ENCODE measurements at regions of chr11 and their contacts with region 1.

Region 1: GRCh38 chr11:1574238-1574932 is 2.3 kb upstream of the DUSP8 start:
- DNase-seq: no peak
- ATAC-seq: peak; percentile 60
- H3K4me3 ChIP-seq: peak overlapping the region; percentile 65 to 76 (median 72)
- H3K27ac ChIP-seq: no peak overlapping the region
- H3K4me1 ChIP-seq: peaks cover 35% of the 10 kb centered on the region
- H3K27me3 ChIP-seq: peaks cover 1 to 17% of the 10 kb centered on the region in 2 experiments; a peak in 3 of 5 replicates
- CTCF ChIP-seq: peak; percentile 71
- EP300 ChIP-seq: no peak
- POLR2A ChIP-seq: no peak
- RAD21 ChIP-seq: peak; percentile 94

Region 2: GRCh38 chr11:1541474-1542204 is 32.7 kb before region 1 on chr11:
- CTCF ChIA-PET with region 1: interaction called, 17 read pairs
- POLR2A ChIA-PET with region 1: interaction called, 4 read pairs
- in situ Hi-C with region 1: no loop called
- intact Hi-C with region 1: loop called (anchors 2 kb)
- DNase-seq: peak; percentile 45
- ATAC-seq: peak; percentile 86
- H3K4me3 ChIP-seq: peak overlapping the region in 1 of 3 experiments; percentile 0; a peak in 1 of 6 replicates
- H3K27ac ChIP-seq: no peak overlapping the region
- H3K4me1 ChIP-seq: peaks cover 5% of the 10 kb centered on the region; the same call in 1 of the 2 replicates
- H3K27me3 ChIP-seq: peaks cover 33 to 69% of the 10 kb centered on the region in 2 experiments; a peak in 4 of 5 replicates
- CTCF ChIP-seq: 0 out of 2 replicates have a peak, but pooled peaks have one; percentile 18
- EP300 ChIP-seq: no peak
- POLR2A ChIP-seq: no peak
- RAD21 ChIP-seq: no peak

Region 3: GRCh38 chr11:1546536-1547400 is 27.6 kb before region 1 on chr11:
- CTCF ChIA-PET with region 1: interaction called, 17 read pairs
- POLR2A ChIA-PET with region 1: interaction called, 4 read pairs
- in situ Hi-C with region 1: no loop called
- intact Hi-C with region 1: loop called (anchors 2 kb)
- DNase-seq: no peak
- ATAC-seq: peak; percentile 59
- H3K4me3 ChIP-seq: peak overlapping the region; percentile 3 to 63 (median 40); a peak in 4 of 6 replicates
- H3K27ac ChIP-seq: no peak overlapping the region
- H3K4me1 ChIP-seq: peaks cover 9% of the 10 kb centered on the region
- H3K27me3 ChIP-seq: peaks cover 34 to 67% of the 10 kb centered on the region in 2 experiments; a peak in 4 of 5 replicates
- CTCF ChIP-seq: peak; percentile 71
- EP300 ChIP-seq: no peak
- POLR2A ChIP-seq: no peak
- RAD21 ChIP-seq: peak; percentile 88

Region 4: DNA sequence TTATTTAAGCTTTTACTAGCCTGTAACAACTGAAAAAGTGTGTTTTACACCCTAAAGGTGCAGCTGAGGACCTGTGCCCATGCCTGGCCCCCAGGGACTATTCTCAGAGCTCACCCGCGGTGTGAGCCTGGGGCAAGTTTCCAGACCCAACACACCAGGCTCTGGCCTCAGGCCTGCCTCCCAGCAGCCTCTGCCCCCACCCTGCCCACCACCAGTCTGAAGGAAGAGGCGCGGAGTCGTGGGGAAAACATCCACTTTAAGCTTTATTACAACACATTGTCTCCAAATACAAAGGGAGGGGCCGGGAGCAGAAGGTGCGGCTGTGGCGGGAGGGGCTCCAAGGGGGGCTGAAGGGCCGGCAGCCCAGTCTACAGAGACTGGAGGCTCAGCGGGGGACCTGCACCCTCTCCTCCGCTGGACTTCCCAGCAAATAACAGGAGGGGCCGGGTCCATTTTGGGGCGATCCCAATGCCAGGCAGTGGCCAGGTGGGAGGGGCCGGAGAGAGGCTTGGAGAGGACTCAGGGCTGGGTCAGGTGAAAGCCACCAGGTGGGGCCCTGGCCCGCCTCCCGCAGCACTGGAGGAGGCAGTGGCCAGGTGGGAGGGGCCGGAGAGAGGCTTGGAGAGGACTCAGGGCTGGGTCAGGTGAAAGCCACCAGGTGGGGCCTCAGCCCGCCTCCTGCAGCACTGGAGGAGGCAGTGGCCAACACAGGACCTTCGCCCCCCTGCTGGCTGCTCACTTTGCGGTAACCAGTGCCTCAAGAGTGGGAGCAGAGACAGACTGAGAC is 20.4 kb before region 1 on chr11:
- CTCF ChIA-PET with region 1: no interaction called
- POLR2A ChIA-PET with region 1: no interaction called
- in situ Hi-C with region 1: no loop called
- intact Hi-C with region 1: loop called (anchors 2 kb)
- DNase-seq: no peak
- ATAC-seq: peak; percentile 70
- H3K4me3 ChIP-seq: no peak overlapping the region
- H3K27ac ChIP-seq: no peak overlapping the region
- H3K4me1 ChIP-seq: peaks cover 6% of the 10 kb centered on the region; the same call in 1 of the 2 replicates
- H3K27me3 ChIP-seq: peaks cover 2 to 4% of the 10 kb centered on the region in 2 experiments; a peak in 4 of 5 replicates
- CTCF ChIP-seq: peak; percentile 70
- EP300 ChIP-seq: no peak
- POLR2A ChIP-seq: no peak
- RAD21 ChIP-seq: no peak; the same call in 1 of the 2 replicates

Region 5: DNA sequence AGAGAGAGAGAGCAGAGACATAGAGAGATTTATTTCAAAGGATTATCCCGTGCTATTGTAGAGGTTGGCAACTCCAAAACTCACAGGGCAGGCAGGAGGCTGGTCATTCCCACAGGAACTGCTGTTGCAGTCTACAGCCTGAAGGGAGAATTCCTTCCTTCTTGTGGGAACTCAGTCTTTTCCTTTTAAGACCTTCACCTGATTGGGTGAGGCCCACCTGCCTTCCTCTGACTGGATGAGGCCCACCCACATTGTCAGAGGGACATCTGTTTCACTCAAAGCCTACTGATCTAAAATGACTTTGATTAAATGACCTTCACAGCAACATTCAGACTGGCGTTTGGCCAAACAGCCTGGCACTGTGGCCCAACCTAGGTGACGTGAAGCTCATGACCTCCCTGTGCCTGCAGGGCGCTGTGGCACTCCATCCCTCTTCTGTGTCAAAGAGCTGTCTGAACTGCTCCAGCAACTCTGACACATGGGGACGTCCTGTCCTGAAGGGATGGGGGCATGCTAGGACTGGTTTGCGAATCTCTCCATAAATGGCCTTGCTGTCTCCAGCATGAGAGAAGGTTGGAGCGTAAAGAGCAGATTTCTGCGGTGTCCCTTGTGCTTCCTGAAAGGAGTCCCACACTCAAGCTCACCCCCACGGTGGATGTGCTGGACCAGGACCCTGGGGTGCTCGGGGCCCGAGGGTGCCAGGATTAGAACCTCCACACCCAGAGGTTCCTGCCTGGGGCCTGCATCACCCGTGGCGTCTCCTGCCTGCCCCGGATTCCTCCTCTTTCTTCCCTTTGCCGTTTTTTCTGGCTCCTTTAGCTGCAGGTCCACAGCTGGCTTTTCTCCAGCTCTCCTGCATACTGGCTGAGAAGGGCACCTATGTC is 75.9 kb after region 1 on chr11:
- CTCF ChIA-PET with region 1: no interaction called
- POLR2A ChIA-PET with region 1: no interaction called
- in situ Hi-C with region 1: no loop called
- intact Hi-C with region 1: no loop called
- DNase-seq: no peak
- ATAC-seq: no peak
- H3K4me3 ChIP-seq: no peak overlapping the region
- H3K27ac ChIP-seq: no peak overlapping the region
- H3K4me1 ChIP-seq: peaks cover 61% of the 10 kb centered on the region
- H3K27me3 ChIP-seq: peaks cover 1 to 17% of the 10 kb centered on the region in 2 experiments; a peak in 3 of 5 replicates
- CTCF ChIP-seq: no peak
- EP300 ChIP-seq: no peak
- POLR2A ChIP-seq: no peak
- RAD21 ChIP-seq: no peak